CD8-positive, alpha-beta memory T cell (primary cell): ENCODE measurements at regions of chr16 and their contacts with region 1.

Region 1: GRCh38 chr16:28823872-28824716 is 1.3 kb downstream of the ATXN2L start:
- DNase-seq: peak; percentile 94 to 98 (median 94)
- H3K4me3 ChIP-seq: peak overlapping the region; percentile 94
- H3K4me3 Mint-ChIP-seq: peak overlapping the region; percentile 96 to 99 (median 97)
- H3K27ac ChIP-seq: peak overlapping the region; percentile 96
- H3K27ac Mint-ChIP-seq: peak overlapping the region; percentile 98 to 100 (median 99)
- H3K4me1 ChIP-seq: peaks cover 29% of the 10 kb centered on the region
- H3K4me1 Mint-ChIP-seq: peaks cover 34 to 47% (median 35%) of the 10 kb centered on the region in 3 donors
- H3K27me3 ChIP-seq: no peaks in the 10 kb centered on the region
- H3K27me3 Mint-ChIP-seq: peaks cover 0 to 7% of the 10 kb centered on the region in 2 donors

Region 2: GRCh38 chr16:28549390-28549789 is 274.7 kb before region 1 on chr16:
- CTCF ChIA-PET with region 1: no interaction called
- POLR2A ChIA-PET with region 1: no interaction called
- DNase-seq: peak in 3 of 5 donors; percentile 15 to 46 (median 37)
- H3K4me3 ChIP-seq: no peak overlapping the region
- H3K4me3 Mint-ChIP-seq: peak overlapping the region in 1 of 7 donors; percentile 73
- H3K27ac ChIP-seq: no peak overlapping the region
- H3K27ac Mint-ChIP-seq: peak overlapping the region in 4 of 8 donors; percentile 2 to 67 (median 50)
- H3K4me1 ChIP-seq: peaks cover 7% of the 10 kb centered on the region
- H3K4me1 Mint-ChIP-seq: peaks cover 11 to 17% (median 11%) of the 10 kb centered on the region in 3 donors
- H3K27me3 ChIP-seq: no peaks in the 10 kb centered on the region
- H3K27me3 Mint-ChIP-seq: peaks cover 0 to 3% of the 10 kb centered on the region in 2 donors

Region 3: GRCh38 chr16:28846080-28846932 is 22.2 kb after region 1 on chr16 and contains the start of gene TUFM:
- CTCF ChIA-PET with region 1: interaction called, 7 read pairs
- POLR2A ChIA-PET with region 1: interaction called, 35 read pairs
- DNase-seq: peak; percentile 96 to 99 (median 98)
- H3K4me3 ChIP-seq: peak within 1 kb of the TSS; percentile 90
- H3K4me3 Mint-ChIP-seq: peak within 1 kb of the TSS; percentile 90 to 95 (median 94)
- H3K27ac ChIP-seq: peak within 1 kb of the TSS; percentile 89
- H3K27ac Mint-ChIP-seq: peak within 1 kb of the TSS; percentile 84 to 99 (median 94)
- H3K4me1 ChIP-seq: peaks cover 26% of the 10 kb centered on the region
- H3K4me1 Mint-ChIP-seq: peaks cover 28 to 41% (median 30%) of the 10 kb centered on the region in 3 donors
- H3K27me3 ChIP-seq: no peaks in the 10 kb centered on the region
- H3K27me3 Mint-ChIP-seq: no peaks in the 10 kb centered on the region
- total RNA-seq, gene TUFM: 320 to 347 TPM